Left ventricle myocardium inferior (tissue), 1 donor: ENCODE measurements at regions of chr16 and their contacts with region 1.

Region 1: DNA sequence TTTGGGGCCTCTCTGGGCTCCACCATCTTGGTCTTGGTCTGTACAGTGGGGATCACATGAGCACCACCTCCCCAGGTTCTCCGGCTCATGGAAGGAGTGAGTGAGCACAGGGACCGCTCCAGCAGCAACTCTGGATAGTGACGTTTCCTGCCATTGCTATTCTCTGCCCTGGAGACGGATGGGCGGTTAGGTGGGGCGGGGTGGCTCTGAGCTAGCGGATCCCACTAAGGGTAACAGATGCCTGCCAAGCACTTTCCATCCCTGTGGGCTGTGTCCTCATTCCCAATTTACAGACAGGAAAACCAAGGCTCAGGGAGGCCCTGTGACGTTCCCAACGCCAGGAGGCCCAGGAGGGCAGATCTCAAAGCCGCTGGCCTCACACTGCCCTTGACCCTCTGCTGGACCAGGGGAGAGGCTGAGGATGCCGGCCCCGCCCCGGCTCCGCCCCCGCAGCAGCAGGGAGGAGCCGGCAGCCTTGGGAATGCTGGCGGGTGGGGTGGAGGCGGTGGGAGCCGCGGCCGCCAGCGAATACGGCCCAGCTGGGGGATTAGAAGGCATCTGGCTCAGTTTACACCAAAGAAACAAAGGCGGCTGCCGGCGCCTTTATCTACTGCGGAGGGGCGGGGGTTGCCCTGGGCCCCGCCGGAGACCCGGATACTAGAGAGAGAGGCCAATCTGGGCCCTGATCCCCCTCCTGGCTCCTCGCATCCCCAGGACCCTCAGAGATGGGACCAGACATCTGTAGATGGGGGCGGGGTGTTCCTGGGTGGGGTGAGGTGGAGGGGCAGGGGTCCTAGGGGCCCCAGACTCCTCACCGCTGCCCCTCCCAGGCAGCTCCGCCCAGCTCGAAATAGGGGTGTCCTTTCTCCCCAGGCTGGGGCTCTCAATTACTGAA is 122.3 kb upstream of the CIBAR2 start:
- DNase-seq: peak; percentile 67
- H3K4me3 ChIP-seq: peak overlapping the region; percentile 60
- H3K27ac ChIP-seq: peak overlapping the region; percentile 66
- H3K4me1 ChIP-seq: peaks cover 58% of the 10 kb centered on the region
- H3K27me3 ChIP-seq: no peaks in the 10 kb centered on the region
- CTCF ChIP-seq: no peak

Region 2: DNA sequence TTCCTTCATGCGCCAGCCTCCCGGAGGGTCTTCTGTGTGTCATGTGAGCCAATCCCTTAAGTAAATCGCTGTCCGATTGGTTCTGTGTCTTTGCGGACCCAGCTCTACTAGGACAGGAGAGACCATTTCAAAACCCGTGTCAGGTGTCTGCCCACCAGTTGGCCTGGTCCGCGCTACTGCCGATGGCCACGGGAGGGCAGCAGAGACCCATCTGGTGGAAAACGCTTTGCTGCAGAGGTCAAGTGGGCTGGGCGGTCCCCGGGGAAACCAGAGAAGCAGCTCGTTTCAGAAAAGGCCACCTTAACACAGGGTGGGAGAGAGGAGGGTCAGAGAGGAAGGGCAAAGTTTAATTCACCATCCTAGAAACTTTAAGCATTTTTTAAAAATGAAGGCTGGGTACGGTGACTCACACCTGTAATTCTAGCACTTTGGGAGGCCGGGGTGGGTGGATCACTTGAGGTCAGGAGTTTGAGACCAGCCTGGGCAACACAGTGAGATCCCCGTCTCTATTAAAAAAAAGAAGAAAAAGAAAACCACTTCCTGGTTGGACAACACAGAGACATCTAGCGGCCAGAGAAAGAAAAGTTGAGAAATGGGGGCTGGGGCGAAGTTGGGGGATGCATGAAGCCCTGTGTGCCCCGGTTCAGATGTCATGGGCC is 119.5 kb before region 1 on chr16:
- intact Hi-C with region 1: loop called (anchors 10 kb)
- DNase-seq: peak; percentile 87
- H3K4me3 ChIP-seq: peak overlapping the region; percentile 32
- H3K27ac ChIP-seq: peak overlapping the region; percentile 72
- H3K4me1 ChIP-seq: peaks cover 8% of the 10 kb centered on the region
- H3K27me3 ChIP-seq: no peaks in the 10 kb centered on the region
- CTCF ChIP-seq: peak; percentile 98

Region 3: DNA sequence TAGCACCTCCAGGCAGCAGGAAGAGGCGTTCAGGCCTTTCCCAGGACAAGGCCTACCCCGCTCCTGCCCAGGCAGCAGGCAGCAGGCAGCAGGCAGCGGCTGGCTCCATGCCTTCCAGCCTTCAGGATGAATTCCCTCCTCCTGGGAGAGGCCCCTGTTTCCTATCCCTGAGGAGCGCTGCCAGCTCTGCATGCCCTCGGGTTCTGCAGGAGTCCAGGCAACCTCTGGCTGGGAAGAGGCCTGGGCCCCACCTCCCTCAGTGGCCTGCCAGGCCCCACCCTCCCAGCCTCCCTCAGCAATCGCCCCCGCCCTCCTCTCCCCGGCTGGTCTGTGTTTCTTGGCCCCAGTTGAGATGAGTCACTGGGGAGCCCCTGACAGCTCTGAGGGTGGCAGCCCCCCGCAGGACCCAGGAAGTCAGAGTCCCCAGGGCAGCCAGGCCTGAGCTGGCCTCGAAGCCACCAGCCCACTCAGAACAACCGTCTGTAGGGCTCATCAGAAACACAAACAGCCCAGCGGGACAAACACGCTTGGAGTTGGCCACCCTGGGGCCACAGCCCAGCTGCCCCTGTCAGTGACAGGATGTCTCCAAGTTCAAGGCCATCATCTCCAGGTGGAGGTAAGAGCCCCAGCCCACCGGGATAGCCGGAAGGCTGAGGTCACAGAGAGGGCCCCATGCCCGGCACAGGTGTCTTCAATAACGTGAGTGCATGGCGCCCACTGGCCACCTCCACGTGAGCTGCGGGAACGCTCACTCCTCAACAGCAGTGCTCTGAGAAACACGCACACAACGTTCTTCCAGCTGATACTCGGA is 82.7 kb before region 1 on chr16:
- intact Hi-C with region 1: no loop called
- DNase-seq: peak; percentile 83
- H3K4me3 ChIP-seq: no peak overlapping the region
- H3K27ac ChIP-seq: peak overlapping the region; percentile 94
- H3K4me1 ChIP-seq: peaks cover 77% of the 10 kb centered on the region
- H3K27me3 ChIP-seq: no peaks in the 10 kb centered on the region
- CTCF ChIP-seq: no peak